ENCODE measurements at regions of chr19 and their contacts with region 1.

Region 1: GRCh38 chr19:16572332-16573211 is at the start of gene SLC35E1:
- DNase-seq: peak; percentile 94 to 97
- ATAC-seq: peak; percentile 82 to 88
- H3K4me3 ChIP-seq: peak within 1 kb of the TSS; percentile 64 to 82 (median 82)
- H3K27ac ChIP-seq: peak within 1 kb of the TSS; percentile 90 to 97 (median 95)
- H3K4me1 ChIP-seq: peaks cover 48 to 57% of the 10 kb centered on the region in 2 donors
- H3K27me3 ChIP-seq: no peaks in the 10 kb centered on the region
- CTCF ChIP-seq: no peak
- POLR2A ChIP-seq: peak; percentile 88 to 89
- total RNA-seq, gene SLC35E1: 24.1 to 60.3 (median 40.1) TPM

Region 2: DNA sequence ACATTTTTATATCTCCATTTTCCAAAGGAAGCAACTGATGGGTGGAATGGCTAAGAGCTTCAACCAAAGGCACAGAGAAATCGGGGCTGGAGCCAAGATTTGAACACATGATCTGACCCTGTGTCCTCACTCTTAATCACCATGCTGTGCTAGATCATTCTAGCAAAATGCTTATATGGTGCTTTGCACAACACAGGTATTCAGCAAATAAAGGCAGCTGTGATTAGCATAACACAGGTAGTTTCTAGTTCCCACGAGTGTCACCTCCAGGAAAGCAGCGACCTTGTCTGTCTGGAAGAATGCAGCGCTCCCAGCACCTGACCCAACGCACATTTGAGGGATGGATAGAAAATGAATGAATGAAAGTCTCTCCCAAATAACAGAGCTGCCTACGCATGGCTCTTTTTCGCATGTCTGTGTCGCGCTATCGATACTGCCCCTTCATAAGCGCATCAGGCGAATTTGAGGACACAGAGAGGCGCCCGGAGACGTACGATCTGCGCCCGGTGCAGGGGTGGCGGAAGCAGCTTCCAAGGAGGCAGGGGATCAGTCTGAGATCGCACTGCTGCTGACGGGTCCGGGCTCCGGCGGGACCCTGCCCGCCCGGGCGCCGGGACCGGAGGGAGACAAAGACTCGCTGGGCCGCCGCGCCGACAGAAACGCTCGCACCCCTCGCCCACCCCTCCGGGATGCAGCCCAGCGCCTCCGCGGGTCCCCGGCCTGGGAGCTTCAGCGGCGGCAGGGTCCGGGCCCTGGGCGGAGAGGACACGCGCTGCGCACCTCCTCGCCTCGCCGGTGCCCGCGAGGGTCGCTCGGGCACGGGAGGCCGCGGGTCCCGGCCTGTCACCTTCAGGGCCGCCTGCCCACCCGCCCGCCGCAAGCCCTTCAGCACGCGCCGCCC is 101.4 kb before region 1 on chr19:
- in situ Hi-C with region 1: no loop called
- intact Hi-C with region 1: no loop called
- DNase-seq: peak in 1 of 2 donors; percentile 67
- ATAC-seq: peak; percentile 28 to 44
- H3K4me3 ChIP-seq: peak overlapping the region; percentile 70 to 84 (median 77)
- H3K27ac ChIP-seq: peak overlapping the region; percentile 91 to 99 (median 96)
- H3K4me1 ChIP-seq: peaks cover 48 to 55% of the 10 kb centered on the region in 2 donors
- H3K27me3 ChIP-seq: no peaks in the 10 kb centered on the region
- CTCF ChIP-seq: no peak
- POLR2A ChIP-seq: peak; percentile 24 to 35

Region 3: DNA sequence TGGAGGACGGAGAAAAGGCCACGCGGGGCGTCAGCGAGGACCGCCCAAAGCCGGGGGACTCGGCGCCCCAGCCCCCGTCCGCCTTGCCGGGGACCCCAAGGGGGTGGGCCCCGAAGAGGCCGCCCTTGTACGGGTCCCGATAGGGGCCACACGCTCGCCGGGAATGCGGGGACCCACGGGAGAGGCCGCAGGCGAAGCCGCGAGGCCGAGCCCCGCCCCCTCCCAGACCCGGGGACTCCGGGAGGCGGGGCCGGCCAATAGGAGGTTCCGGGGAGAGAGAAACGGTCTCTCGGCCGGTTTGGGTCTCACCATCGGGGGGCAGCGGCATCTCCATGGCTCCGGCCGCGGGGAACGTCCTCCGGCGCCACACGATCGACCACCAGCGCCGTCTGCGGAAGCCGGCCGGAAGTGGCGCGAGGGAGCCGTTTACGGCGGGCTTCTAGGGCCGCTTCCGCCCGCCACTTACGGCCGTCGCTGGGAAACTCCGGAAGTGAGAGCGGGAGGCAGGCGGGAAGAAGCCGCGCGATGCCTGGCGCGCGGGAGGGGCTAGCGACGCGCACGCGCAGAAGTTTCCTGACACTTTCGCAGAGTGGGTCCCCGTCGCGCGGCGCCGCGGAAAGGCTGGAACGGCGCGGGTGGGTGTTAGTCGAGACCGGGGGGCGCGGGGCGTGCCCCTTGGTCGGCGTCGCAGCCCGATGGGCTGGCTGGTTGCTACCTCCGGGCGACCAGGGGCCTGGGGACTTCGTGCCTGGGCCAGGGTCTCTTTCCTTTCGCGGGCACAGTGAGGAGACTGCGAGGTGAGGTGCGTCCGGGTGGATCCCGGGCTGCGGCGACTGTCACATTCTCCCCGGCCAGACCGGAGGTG is 30.3 kb before region 1 on chr19 and contains the start of gene CHERP:
- in situ Hi-C with region 1: no loop called
- intact Hi-C with region 1: loop called (anchors 1 kb)
- DNase-seq: peak; percentile 87 to 90
- ATAC-seq: peak; percentile 96 to 97
- H3K4me3 ChIP-seq: peak within 1 kb of the TSS; percentile 85 to 96 (median 90)
- H3K27ac ChIP-seq: peak within 1 kb of the TSS; percentile 91 to 97 (median 92)
- H3K4me1 ChIP-seq: peaks cover 31 to 49% of the 10 kb centered on the region in 2 donors
- H3K27me3 ChIP-seq: no peaks in the 10 kb centered on the region
- CTCF ChIP-seq: peak in 2 of 5 experiments; percentile 25 to 26
- POLR2A ChIP-seq: peak; percentile 90 to 94
- total RNA-seq, gene CHERP: 7.4 to 12.1 (median 9.8) TPM

Region 4: DNA sequence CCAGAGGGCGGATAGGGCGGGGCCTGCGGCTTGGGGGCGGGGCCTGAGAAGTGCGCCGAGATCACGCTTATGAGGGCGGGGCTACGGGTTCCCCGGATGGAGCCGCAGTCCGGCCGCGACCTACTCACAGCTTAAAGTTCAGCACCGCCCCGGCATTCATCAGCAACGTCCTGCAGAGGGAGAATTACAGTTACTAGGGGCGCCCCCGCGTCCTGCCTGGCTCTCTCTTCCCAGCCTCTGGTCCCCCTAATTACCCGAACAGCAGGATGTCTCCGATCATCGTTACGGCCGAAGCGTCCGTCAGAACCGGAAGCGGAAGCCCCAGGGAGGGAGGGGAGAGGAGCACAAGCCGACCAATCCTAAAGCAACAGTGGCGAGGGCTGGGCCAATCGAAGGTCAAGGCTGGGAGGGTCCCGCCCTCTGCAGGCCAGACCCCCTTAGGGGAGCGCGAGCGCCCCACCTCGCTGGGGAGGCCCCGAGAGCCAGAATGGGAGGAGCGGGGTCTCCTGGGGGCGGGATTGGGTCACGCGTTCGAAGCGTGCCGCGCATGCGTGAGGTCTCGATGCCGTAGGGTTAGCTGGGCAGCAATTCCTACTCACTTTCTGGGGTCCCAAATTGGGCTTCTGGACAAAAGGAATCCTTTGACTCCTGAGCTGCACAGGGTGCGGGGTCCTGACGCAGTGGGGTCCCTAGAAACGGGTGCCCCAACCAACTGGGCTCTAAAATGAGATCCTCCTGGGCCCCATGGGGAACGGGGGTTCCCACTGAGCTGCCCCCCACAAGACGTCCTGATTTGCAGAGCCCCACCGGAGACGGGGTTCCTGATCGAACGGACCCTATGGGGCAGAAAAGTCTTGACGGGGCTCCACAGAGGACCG is 87.5 kb after region 1 on chr19 and contains the start of gene SMIM7:
- in situ Hi-C with region 1: no loop called
- intact Hi-C with region 1: loop called (anchors 2 kb)
- DNase-seq: peak; percentile 99
- ATAC-seq: peak; percentile 80 to 90
- H3K4me3 ChIP-seq: peak within 1 kb of the TSS; percentile 75 to 95 (median 89)
- H3K27ac ChIP-seq: peak within 1 kb of the TSS; percentile 100
- H3K4me1 ChIP-seq: peaks cover 37 to 38% of the 10 kb centered on the region in 2 donors
- H3K27me3 ChIP-seq: no peaks in the 10 kb centered on the region
- CTCF ChIP-seq: peak in 2 of 5 experiments; percentile 8 to 27
- POLR2A ChIP-seq: peak; percentile 90 to 94
- total RNA-seq, gene SMIM7: 36.4 to 60.5 (median 49.8) TPM

Region 5: DNA sequence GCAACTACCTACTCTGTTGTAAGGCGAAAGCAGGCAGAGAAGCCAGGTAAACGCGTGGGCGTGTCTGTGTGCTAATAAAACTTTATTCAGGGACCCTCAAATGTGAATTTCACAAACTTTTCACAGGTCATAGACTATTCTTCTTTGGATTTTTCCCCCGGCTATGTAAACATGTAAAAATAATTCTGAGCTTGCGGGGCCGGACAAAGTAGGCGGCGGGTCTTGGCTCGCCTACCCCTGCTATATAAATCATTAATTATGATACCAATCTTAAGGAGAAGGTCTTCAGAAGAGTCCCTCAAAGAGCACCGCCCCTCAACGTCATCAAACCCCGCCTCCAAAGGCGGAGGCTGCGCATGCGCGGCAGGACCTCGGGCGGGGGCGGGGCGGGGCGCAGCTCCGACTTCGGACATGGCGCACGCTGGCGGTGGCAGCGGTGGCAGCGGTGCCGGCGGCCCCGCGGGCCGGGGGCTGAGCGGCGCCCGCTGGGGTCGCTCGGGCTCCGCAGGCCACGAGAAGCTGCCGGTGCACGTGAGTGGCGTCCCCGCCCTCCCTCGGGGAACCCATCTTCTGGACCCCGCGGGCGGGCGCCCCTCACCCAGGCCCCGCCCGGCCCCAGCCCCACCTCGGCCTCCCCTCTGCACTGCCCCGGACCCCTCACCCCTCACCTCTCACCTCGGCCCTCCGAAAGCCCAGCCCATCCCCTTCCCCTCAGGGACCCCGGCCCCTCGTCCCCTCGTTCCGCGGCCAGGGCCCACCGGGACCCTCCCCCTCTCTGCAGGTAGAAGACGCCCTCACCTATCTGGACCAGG is 256.6 kb after region 1 on chr19 and contains the start of gene SIN3B:
- in situ Hi-C with region 1: loop called in 1 of 4 experiments (anchors 25 kb)
- intact Hi-C with region 1: no loop called
- DNase-seq: peak; percentile 69 to 78
- ATAC-seq: peak; percentile 94 to 95
- H3K4me3 ChIP-seq: peak within 1 kb of the TSS; percentile 64 to 96 (median 80)
- H3K27ac ChIP-seq: peak within 1 kb of the TSS; percentile 84 to 90 (median 86)
- H3K4me1 ChIP-seq: peaks cover 18 to 25% of the 10 kb centered on the region in 2 donors
- H3K27me3 ChIP-seq: no peaks in the 10 kb centered on the region
- CTCF ChIP-seq: peak in 1 of 5 experiments; percentile 9
- POLR2A ChIP-seq: peak; percentile 59 to 72
- total RNA-seq, gene SIN3B: 11.6 to 15.2 (median 14.3) TPM